B cell (primary cell): ENCODE measurements at regions of chr9 and their contacts with region 1.

Region 1: GRCh38 chr9:132849185-132849706 is 28.8 kb downstream of the AK8 start:
- DNase-seq: no peak
- ATAC-seq: no peak
- H3K4me3 ChIP-seq: no peak overlapping the region
- H3K4me3 Mint-ChIP-seq: peak overlapping the region; percentile 48
- H3K27ac ChIP-seq: no peak overlapping the region
- H3K27ac Mint-ChIP-seq: peak overlapping the region; percentile 47
- H3K4me1 ChIP-seq: peaks cover 0 to 36% of the 10 kb centered on the region in 2 donors
- H3K4me1 Mint-ChIP-seq: peaks cover 21% of the 10 kb centered on the region
- H3K27me3 ChIP-seq: no peaks in the 10 kb centered on the region
- H3K27me3 Mint-ChIP-seq: no peaks in the 10 kb centered on the region
- CTCF ChIP-seq: no peak

Region 2: GRCh38 chr9:132135456-132135855 is 713.8 kb before region 1 on chr9:
- CTCF ChIA-PET with region 1: no interaction called
- POLR2A ChIA-PET with region 1: no interaction called
- intact Hi-C with region 1: no loop called
- DNase-seq: no peak
- ATAC-seq: no peak
- H3K4me3 ChIP-seq: no peak overlapping the region
- H3K4me3 Mint-ChIP-seq: no peak overlapping the region
- H3K27ac ChIP-seq: no peak overlapping the region
- H3K27ac Mint-ChIP-seq: no peak overlapping the region
- H3K4me1 ChIP-seq: no peaks in the 10 kb centered on the region
- H3K4me1 Mint-ChIP-seq: no peaks in the 10 kb centered on the region
- H3K27me3 ChIP-seq: peaks cover 0 to 26% (median 3%) of the 10 kb centered on the region in 4 experiments
- H3K27me3 Mint-ChIP-seq: peaks cover 47% of the 10 kb centered on the region
- CTCF ChIP-seq: no peak

Region 3: DNA sequence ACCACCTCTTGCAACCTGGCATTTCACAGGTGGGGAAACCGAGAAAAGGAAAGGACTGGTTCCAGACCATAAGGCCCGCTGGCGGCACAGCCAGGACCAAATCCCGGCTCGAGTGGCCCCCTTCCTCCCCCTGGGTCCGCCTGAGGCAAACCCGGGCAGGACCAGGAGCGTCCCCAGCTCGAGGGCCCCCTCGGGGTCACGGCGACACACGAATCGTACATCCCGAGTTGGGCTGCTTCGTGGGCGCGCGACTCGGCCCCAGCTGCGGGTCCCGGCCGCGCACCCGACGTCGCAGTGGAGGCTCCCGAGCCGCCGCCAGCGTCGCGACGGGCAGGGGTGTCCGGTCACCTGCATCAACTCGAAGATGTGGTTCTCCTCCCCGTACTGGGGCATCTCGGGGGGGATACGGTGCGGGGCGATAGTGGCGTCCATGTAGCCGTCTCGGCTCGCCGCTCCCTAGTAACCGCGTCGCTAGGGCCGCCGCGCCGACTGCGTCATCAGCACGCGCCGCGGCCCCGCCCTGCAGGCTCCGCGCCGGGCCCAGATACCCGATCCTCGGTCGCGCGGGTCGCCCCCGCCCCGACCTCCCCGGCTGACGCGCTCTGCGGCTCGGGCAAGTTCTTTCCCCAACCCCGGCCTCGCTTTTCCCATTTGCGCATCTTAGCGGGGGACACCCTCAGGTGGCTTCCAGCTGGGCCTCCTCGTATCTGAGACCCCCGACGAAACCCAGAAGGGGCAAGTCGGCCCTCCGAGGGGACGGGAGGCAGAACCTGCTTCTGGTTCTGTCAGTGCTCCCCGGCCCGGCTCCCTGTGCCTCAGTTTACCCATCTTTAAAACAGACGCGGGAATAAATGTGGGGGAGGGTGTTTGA is 28.8 kb after region 1 on chr9 and contains the start of gene AK8:
- CTCF ChIA-PET with region 1: interaction called, 4 read pairs
- POLR2A ChIA-PET with region 1: interaction called, 12 read pairs
- intact Hi-C with region 1: no loop called
- DNase-seq: peak; percentile 90
- ATAC-seq: peak; percentile 85
- H3K4me3 ChIP-seq: peak within 1 kb of the TSS; percentile 64 to 99 (median 94)
- H3K4me3 Mint-ChIP-seq: peak within 1 kb of the TSS; percentile 89
- H3K27ac ChIP-seq: peak within 1 kb of the TSS; percentile 51 to 81
- H3K27ac Mint-ChIP-seq: peak within 1 kb of the TSS; percentile 91
- H3K4me1 ChIP-seq: peaks cover 16 to 29% of the 10 kb centered on the region in 2 donors
- H3K4me1 Mint-ChIP-seq: peaks cover 24% of the 10 kb centered on the region
- H3K27me3 ChIP-seq: no peaks in the 10 kb centered on the region
- H3K27me3 Mint-ChIP-seq: no peaks in the 10 kb centered on the region
- CTCF ChIP-seq: no peak
- total RNA-seq, gene AK8: 1.9 and 4.4 TPM in 2 replicates